ENCODE measurements at regions of chr5 and their contacts with region 1.

Region 1: GRCh38 chr5:101811466-101811865 is 484.6 kb downstream of the SLCO4C1 start:
- DNase-seq: no peak
- H3K4me3 ChIP-seq: no peak overlapping the region
- H3K27ac ChIP-seq: no peak overlapping the region
- H3K4me1 ChIP-seq: no peaks in the 10 kb centered on the region
- H3K27me3 ChIP-seq: no peaks in the 10 kb centered on the region
- CTCF ChIP-seq: no peak
- POLR2A ChIP-seq: no peak

Region 2: DNA sequence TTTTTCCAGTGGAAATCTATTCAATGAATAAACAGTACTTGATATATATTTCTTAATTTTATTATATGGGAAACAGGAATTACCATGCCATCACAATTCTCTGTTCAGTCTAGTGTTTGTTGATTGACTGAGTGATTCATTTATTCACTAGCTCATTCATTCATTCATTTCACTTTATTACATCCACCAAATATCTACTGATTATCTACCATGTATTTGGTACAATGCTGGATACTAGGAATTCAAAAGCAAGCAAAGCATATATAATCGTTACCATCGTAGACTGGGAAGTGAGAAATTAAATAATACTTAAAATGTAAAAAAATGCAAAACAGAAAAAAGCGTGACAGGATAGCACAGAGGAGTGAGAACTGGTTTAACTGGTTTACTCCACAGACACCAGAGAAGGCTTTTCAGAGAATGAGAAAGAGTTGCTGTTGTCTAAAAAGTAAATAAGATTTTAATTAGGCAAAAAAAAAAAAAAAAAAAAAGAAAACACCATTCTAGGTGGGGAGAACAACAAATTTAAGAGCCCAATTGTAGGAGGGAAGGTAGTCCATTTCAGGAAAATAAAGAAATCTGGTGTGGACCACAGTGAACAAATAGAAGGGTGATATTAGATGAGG is 250.5 kb before region 1 on chr5:
- CTCF ChIA-PET with region 1: no interaction called
- POLR2A ChIA-PET with region 1: no interaction called
- dilution Hi-C with region 1: no loop called
- intact Hi-C with region 1: no loop called
- DNase-seq: no peak
- H3K4me3 ChIP-seq: no peak overlapping the region
- H3K27ac ChIP-seq: no peak overlapping the region
- H3K4me1 ChIP-seq: no peaks in the 10 kb centered on the region
- H3K27me3 ChIP-seq: no peaks in the 10 kb centered on the region
- CTCF ChIP-seq: no peak
- POLR2A ChIP-seq: no peak

Region 3: GRCh38 chr5:101626572-101626971 is 184.9 kb before region 1 on chr5:
- CTCF ChIA-PET with region 1: no interaction called
- POLR2A ChIA-PET with region 1: no interaction called
- dilution Hi-C with region 1: no loop called
- intact Hi-C with region 1: no loop called
- DNase-seq: no peak
- H3K4me3 ChIP-seq: no peak overlapping the region
- H3K27ac ChIP-seq: no peak overlapping the region
- H3K4me1 ChIP-seq: no peaks in the 10 kb centered on the region
- H3K27me3 ChIP-seq: no peaks in the 10 kb centered on the region
- CTCF ChIP-seq: no peak
- POLR2A ChIP-seq: no peak

Region 4: GRCh38 chr5:101860145-101860544 is 48.7 kb after region 1 on chr5:
- CTCF ChIA-PET with region 1: no interaction called
- POLR2A ChIA-PET with region 1: no interaction called
- dilution Hi-C with region 1: no loop called
- intact Hi-C with region 1: loop called (anchors 2 kb)
- DNase-seq: no peak
- H3K4me3 ChIP-seq: no peak overlapping the region
- H3K27ac ChIP-seq: no peak overlapping the region
- H3K4me1 ChIP-seq: no peaks in the 10 kb centered on the region
- H3K27me3 ChIP-seq: no peaks in the 10 kb centered on the region
- CTCF ChIP-seq: no peak
- POLR2A ChIP-seq: no peak

Measured in endothelial cell of umbilical vein (primary cell).